ENCODE measurements at regions of chr19 and their contacts with region 1.

Region 1: DNA sequence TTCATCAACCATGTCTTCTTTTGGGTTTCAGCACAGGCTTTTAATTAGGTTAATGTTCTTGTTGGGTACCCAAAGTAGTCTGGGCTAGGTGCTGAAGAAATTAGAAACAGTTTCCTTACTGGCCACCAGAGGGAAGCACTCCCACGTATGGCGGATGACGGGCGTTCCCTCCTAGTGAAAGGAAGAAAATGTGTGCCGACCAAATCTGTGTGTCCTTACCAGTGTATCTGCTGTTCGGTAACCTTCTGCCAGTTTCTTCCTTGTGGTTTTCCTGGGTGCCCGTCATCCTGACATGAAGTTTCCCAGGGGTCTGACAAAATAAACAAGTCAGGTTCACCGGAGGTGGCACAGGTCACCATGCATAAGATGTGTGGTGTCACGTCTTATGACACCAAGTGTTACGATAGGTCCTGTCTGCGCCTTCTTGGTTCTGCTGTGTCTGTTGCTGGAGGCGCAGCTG is 6.0 kb upstream of the WDR88 start:
- DNase-seq: peak; percentile 70
- ATAC-seq: peak; percentile 75
- H3K4me3 ChIP-seq: no peak overlapping the region
- H3K4me3 Mint-ChIP-seq: no peak overlapping the region
- H3K27ac ChIP-seq: no peak overlapping the region
- H3K27ac Mint-ChIP-seq: no peak overlapping the region
- H3K4me1 ChIP-seq: peaks cover 0 to 2% of the 10 kb centered on the region in 2 donors
- H3K4me1 Mint-ChIP-seq: peaks cover 6% of the 10 kb centered on the region
- H3K27me3 ChIP-seq: no peaks in the 10 kb centered on the region
- H3K27me3 Mint-ChIP-seq: no peaks in the 10 kb centered on the region
- CTCF ChIP-seq: peak; percentile 88

Region 2: GRCh38 chr19:33104520-33104919 is 21.4 kb before region 1 on chr19:
- CTCF ChIA-PET with region 1: interaction called, 10 read pairs
- POLR2A ChIA-PET with region 1: no interaction called
- intact Hi-C with region 1: no loop called
- DNase-seq: no peak
- ATAC-seq: no peak
- H3K4me3 ChIP-seq: no peak overlapping the region
- H3K4me3 Mint-ChIP-seq: no peak overlapping the region
- H3K27ac ChIP-seq: no peak overlapping the region
- H3K27ac Mint-ChIP-seq: no peak overlapping the region
- H3K4me1 ChIP-seq: no peaks in the 10 kb centered on the region
- H3K4me1 Mint-ChIP-seq: no peaks in the 10 kb centered on the region
- H3K27me3 ChIP-seq: no peaks in the 10 kb centered on the region
- H3K27me3 Mint-ChIP-seq: no peaks in the 10 kb centered on the region
- CTCF ChIP-seq: no peak

Region 3: GRCh38 chr19:33186431-33187182 is 60.6 kb after region 1 on chr19:
- CTCF ChIA-PET with region 1: interaction called, 33 read pairs
- POLR2A ChIA-PET with region 1: no interaction called
- intact Hi-C with region 1: loop called (anchors 1 kb)
- DNase-seq: no peak
- ATAC-seq: no peak
- H3K4me3 ChIP-seq: no peak overlapping the region
- H3K4me3 Mint-ChIP-seq: no peak overlapping the region
- H3K27ac ChIP-seq: no peak overlapping the region
- H3K27ac Mint-ChIP-seq: no peak overlapping the region
- H3K4me1 ChIP-seq: peaks cover 8 to 14% of the 10 kb centered on the region in 2 donors
- H3K4me1 Mint-ChIP-seq: peaks cover 9% of the 10 kb centered on the region
- H3K27me3 ChIP-seq: peaks cover 0 to 1% (median 0%) of the 10 kb centered on the region in 4 experiments
- H3K27me3 Mint-ChIP-seq: peaks cover 18% of the 10 kb centered on the region
- CTCF ChIP-seq: no peak

Region 4: DNA sequence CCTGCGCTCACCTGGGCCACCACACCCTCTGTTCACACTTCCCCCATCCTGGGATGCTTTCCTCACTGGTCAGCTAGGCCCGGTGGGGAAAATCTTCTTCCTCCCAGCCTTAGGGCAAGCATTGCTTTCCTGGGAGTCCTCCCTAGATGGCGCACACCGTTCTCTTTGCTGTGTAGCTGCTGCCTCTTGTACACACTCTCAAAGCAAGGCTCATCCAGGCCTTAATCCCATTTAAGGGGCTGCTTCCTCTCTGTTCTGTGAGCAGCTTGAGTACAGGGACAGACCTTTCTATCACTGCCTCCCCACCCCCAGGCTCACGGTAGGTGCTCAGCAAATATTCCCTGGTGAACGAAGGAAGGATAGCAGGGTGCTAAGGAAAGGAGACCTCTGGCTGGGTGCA is 88.6 kb after region 1 on chr19:
- CTCF ChIA-PET with region 1: no interaction called
- POLR2A ChIA-PET with region 1: no interaction called
- intact Hi-C with region 1: no loop called
- DNase-seq: no peak
- ATAC-seq: no peak
- H3K4me3 ChIP-seq: no peak overlapping the region
- H3K4me3 Mint-ChIP-seq: no peak overlapping the region
- H3K27ac ChIP-seq: no peak overlapping the region
- H3K27ac Mint-ChIP-seq: no peak overlapping the region
- H3K4me1 ChIP-seq: no peaks in the 10 kb centered on the region
- H3K4me1 Mint-ChIP-seq: no peaks in the 10 kb centered on the region
- H3K27me3 ChIP-seq: no peaks in the 10 kb centered on the region
- H3K27me3 Mint-ChIP-seq: no peaks in the 10 kb centered on the region
- CTCF ChIP-seq: no peak

Region 5: DNA sequence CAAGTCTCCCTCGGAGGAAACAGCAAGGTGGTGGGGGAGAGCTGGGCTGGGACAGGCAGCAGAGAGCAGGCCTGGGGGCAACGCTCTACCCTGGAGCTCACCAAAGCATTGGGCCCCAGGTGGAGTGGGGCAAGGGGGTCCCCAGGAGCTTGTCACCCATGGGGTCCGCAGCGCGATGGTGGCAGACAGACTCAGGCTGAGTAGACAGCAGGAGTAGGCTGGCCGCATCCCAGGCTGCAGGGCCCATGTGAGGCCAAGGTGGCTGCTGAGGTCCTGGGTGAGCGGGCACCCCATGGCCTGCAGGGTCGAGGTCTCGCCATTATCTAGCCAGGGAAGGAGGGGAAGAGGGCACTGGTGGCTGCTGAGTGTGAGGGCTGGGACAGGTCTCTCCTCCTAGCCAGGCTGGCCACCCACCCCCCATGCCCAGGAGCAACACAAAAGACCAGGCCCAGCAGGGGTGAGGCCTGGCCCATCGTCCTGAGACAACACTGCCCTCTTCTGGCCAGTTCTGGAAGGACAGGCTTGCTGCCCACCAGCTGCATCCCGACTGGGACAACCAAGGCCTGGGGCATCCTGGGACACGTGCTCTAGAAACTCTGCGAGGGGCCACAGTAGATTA is 280.7 kb after region 1 on chr19:
- CTCF ChIA-PET with region 1: interaction called, 5 read pairs
- POLR2A ChIA-PET with region 1: no interaction called
- intact Hi-C with region 1: loop called (anchors 5 kb)
- DNase-seq: peak; percentile 78
- ATAC-seq: peak; percentile 85
- H3K4me3 ChIP-seq: no peak overlapping the region
- H3K4me3 Mint-ChIP-seq: no peak overlapping the region
- H3K27ac ChIP-seq: no peak overlapping the region
- H3K27ac Mint-ChIP-seq: no peak overlapping the region
- H3K4me1 ChIP-seq: no peaks in the 10 kb centered on the region
- H3K4me1 Mint-ChIP-seq: no peaks in the 10 kb centered on the region
- H3K27me3 ChIP-seq: no peaks in the 10 kb centered on the region
- H3K27me3 Mint-ChIP-seq: no peaks in the 10 kb centered on the region
- CTCF ChIP-seq: peak; percentile 90